KBM-7 (cell line): ENCODE measurements at regions of chr10 and their contacts with region 1.

Region 1: DNA sequence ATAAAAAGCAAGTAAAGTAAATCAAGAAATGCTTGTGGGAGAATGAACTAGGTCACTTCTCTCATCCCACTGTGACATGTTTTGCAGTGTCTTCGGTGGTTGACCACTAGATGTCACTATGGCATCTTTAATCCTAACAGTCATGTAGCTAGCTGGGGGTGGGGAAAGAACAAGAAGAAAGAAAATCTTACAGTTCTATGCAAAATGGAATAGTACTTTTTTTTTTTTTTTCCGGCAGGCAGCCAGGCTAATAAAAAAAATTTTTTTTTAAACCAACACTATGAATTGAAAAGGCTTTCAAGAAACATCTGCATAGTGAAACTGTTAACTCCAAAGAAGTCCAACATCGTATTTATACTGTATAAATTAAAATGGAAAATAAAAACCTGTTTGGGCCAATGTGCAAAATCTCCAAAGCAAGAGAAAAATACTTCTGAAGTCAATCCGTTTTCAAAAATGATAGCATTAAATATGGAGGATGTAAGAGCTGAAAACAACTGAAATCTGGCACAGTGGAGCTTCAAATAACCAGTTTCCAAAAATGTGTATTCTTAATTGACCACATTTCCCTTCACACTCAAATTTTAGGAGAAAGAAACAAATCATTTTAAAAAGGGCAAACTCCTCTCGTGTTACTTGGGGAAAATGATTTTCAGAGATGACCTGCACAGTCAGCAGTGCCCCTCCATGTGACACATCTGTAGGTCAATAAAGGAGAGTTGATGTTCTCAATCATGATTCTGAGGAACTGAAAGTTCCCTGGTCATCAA is 38.5 kb downstream of the CDK1 start:
- DNase-seq: peak; percentile 79

Region 2: GRCh38 chr10:60863796-60864195 is 47.0 kb after region 1 on chr10:
- in situ Hi-C with region 1: no loop called
- DNase-seq: no peak

Region 3: DNA sequence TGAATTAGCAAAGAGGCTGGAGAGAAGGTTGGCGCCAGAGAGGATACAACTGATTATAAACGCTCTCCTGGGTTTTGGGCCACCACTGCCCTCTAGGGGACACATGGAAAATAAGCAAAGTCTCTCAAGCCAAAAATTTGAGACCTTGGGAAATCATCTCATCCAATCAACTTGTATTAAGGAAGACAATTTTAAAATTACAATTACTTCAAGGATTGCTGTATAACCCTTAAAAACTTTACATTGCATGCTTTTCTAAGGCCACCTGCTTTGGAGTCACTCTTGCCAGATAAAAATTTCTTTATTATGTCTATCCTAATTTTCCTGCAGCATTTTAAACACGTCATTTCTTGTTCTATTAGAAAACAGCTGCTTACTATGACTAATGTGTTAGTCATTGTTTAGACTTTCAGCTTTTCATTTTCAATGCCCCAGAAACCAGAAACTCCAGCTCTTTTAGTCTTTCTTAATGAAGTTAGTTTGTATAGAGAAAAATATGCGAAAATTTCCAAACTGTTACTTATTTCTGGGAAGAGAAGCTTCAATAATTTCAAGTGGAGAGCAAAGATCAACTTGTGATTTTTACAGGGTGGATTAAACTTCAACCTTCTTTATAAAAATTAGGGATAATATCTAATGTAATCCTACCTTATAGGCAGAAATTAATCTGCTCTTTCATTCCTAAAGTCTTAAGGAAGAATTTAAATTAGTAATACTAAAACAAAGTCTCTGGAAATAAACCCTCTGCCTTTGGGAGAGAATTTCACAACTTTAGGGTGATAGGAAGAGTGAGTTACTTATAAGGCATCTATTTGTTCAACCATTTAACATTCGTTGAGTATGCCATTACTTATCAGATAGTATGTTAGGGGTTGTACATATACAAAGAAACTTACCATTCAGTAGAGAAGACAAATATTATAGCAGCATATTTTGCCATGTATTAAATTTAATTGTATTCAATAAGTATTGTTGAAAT is 147.7 kb after region 1 on chr10:
- in situ Hi-C with region 1: loop called (anchors 25 kb)
- DNase-seq: peak; percentile 57